BJ (cell line): ENCODE measurements at regions of chr18 and their contacts with region 1.

Region 1: DNA sequence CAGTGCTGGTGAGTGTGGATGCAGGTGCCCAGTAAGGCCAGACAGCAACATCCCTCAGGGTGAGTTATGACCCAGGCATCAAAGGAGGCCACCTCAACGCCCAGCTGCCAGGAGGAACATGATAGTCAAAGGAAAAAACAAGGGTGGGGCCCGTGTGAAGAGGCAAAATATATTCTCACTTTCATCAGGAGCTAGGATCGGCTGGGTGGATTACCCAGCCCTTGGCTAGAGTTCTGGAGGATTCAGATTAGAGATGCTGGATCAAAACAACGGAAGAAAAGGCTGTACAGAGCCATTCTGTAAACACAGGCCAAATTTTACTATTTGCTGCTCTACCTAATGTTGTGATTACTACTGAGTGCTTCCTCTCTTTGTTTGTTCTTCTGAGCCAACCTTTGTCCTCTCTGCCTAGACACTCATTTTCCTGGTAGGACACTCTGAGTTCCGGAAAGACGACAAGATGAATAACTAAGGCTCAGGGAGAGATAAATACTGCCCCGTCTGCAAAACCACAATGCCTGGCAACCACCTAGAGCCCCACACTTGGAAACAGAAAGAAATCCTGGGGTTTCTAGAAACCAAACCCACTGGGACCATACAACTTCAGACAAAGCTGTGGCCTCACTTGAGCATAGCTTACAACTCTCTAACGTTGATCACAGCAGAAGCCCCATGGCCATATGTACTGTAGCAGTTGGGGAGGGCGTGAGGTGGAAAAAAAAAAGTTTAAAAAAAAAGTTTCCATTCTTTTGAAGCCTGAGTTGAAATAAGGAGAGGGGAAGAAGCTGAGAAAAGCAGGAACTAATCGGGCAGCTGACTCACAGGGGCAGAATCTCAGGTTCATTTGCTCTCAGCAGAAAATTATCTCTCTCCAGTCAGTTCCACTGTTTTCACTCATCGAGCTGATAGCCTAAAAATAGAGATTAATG is 17.8 kb upstream of the PMAIP1 start:
- DNase-seq: no peak
- H3K4me3 ChIP-seq: no peak overlapping the region
- H3K27me3 ChIP-seq: no peaks in the 10 kb centered on the region
- CTCF ChIP-seq: no peak

Region 2: DNA sequence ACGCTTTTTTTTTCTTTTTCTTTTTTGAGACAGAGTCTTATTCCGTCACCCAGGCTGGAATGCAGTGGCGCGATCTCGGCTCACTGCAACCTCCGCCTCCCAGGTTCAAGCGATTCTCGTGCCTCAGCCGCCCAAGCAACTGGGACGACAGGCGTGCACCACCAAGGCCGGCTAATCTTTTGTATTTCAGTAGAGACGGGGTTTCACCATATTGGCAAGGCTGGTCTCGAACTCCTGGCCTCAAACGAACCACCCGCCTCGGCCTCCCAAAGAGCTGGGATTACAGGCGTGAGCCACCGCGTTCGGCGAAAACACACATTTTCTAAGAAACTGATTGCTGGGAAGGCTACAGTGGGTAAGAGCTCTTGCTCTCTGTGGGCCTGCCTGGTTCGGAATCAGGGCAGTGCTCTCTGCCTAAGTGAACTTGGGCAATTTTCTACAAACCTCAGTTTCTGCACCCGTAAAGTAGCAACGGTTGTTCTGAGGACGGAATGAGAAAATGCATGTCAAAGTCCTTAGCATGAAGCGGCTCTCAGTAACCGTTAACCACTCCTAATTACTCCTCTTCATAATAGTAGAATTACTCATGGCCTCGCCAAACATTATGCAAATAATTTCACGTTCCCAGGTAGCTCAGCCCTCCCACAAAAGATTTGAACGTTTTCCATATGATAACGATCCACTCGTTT is 16.8 kb after region 1 on chr18:
- CTCF ChIA-PET with region 1: interaction called, 11 read pairs
- POLR2A ChIA-PET with region 1: no interaction called
- DNase-seq: no peak
- H3K4me3 ChIP-seq: peak overlapping the region; percentile 71
- H3K27me3 ChIP-seq: no peaks in the 10 kb centered on the region
- CTCF ChIP-seq: no peak

Region 3: GRCh38 chr18:60082790-60083189 is 200.8 kb after region 1 on chr18:
- CTCF ChIA-PET with region 1: no interaction called
- POLR2A ChIA-PET with region 1: no interaction called
- DNase-seq: no peak
- H3K4me3 ChIP-seq: no peak overlapping the region
- H3K27me3 ChIP-seq: no peaks in the 10 kb centered on the region
- CTCF ChIP-seq: no peak